Heart left ventricle (tissue), 16 donors: ENCODE measurements at regions of chr10 and their contacts with region 1.

Region 1: GRCh38 chr10:45464958-45465567 is 91.0 kb downstream of the ALOX5 start:
- DNase-seq: peak; percentile 72 to 86 (median 78)
- ATAC-seq: peak; percentile 87 to 93 (median 92)
- H3K4me3 ChIP-seq: no peak overlapping the region
- H3K27ac ChIP-seq: no peak overlapping the region
- H3K4me1 ChIP-seq: peaks cover 0 to 46% (median 7%) of the 10 kb centered on the region in 12 donors
- H3K27me3 ChIP-seq: no peaks in the 10 kb centered on the region
- CTCF ChIP-seq: peak; percentile 80 to 94 (median 88)
- POLR2A ChIP-seq: no peak

Region 2: GRCh38 chr10:45249978-45250693 is 214.9 kb before region 1 on chr10:
- intact Hi-C with region 1: loop called in 5 of 10 experiments (anchors 2 to 10 kb)
- DNase-seq: peak in 1 of 5 donors; percentile 30
- ATAC-seq: peak in 2 of 4 donors; percentile 49 to 73
- H3K4me3 ChIP-seq: peak overlapping the region in 8 of 12 donors; percentile 11 to 47 (median 29)
- H3K27ac ChIP-seq: no peak overlapping the region
- H3K4me1 ChIP-seq: peaks cover 0 to 11% (median 0%) of the 10 kb centered on the region in 12 donors
- H3K27me3 ChIP-seq: peaks cover 0 to 8% (median 0%) of the 10 kb centered on the region in 9 donors
- CTCF ChIP-seq: peak; percentile 54 to 75 (median 68)
- POLR2A ChIP-seq: no peak

Region 3: DNA sequence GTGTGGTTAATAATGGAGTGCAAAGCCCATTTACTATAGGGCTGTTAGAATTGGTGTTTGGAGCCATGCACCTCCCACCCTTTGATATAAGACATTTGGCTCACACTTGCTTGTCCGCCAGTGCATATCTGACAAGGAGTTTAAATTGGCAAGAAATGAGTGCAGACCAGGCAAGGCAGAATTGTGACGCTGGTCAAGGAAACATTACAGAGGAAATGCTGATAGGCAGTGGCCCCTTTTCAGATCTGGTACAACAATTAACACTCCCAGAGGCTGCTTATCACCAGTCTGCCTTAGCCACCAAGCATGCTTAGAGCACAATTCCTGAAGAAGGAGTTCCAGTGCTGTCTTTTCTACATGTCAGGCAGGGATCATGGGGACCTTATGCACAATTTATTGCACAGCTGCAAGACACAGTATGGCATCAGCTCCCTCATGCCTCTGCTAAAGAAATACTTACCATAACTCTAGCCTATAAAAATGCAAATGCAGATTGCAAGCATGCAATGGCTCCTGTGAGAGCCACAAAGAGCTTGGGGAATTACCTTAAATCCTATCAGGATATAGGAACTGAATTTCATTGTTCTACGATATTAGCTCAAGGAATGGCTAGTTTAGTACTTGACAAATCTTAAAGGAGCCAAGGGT is 184.8 kb before region 1 on chr10:
- intact Hi-C with region 1: no loop called
- DNase-seq: peak in 1 of 5 donors; percentile 10
- ATAC-seq: peak in 3 of 4 donors; percentile 20 to 83 (median 71)
- H3K4me3 ChIP-seq: no peak overlapping the region
- H3K27ac ChIP-seq: peak overlapping the region in 1 of 12 donors; percentile 9
- H3K4me1 ChIP-seq: peaks cover 0 to 15% (median 0%) of the 10 kb centered on the region in 12 donors
- H3K27me3 ChIP-seq: peaks cover 0 to 4% (median 0%) of the 10 kb centered on the region in 9 donors
- CTCF ChIP-seq: no peak
- POLR2A ChIP-seq: no peak

Region 4: GRCh38 chr10:45420453-45421192 is 44.4 kb before region 1 on chr10:
- intact Hi-C with region 1: loop called in 1 of 10 experiments (anchors 5 kb)
- DNase-seq: peak; percentile 78 to 91 (median 87)
- ATAC-seq: peak; percentile 11 to 61 (median 47)
- H3K4me3 ChIP-seq: peak overlapping the region in 6 of 12 donors; percentile 59 to 77 (median 72)
- H3K27ac ChIP-seq: peak overlapping the region; percentile 77 to 99 (median 92)
- H3K4me1 ChIP-seq: peaks cover 5 to 72% (median 24%) of the 10 kb centered on the region in 12 donors
- H3K27me3 ChIP-seq: no peaks in the 10 kb centered on the region
- CTCF ChIP-seq: no peak
- POLR2A ChIP-seq: no peak

Region 5: DNA sequence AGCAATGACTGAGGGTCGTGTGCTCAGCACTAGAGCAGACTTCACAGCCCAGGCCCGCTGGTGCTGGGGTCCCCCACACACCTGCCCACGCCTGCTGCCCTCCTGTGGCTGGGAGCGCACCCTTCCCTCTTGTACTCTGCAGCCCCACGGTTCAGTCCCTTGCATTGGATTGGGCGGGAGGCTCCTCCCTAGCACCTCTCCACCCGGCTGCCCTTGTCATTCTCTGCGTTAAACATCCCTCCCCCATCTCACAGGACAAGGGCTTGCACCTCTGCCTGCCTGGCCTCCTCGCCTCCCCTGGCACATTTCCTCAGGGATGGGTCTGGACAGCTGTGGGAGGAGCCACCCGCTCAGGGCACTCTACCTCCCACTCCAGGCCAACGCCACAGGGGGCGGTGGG is 22.4 kb before region 1 on chr10:
- intact Hi-C with region 1: no loop called
- DNase-seq: no peak
- ATAC-seq: no peak
- H3K4me3 ChIP-seq: no peak overlapping the region
- H3K27ac ChIP-seq: no peak overlapping the region
- H3K4me1 ChIP-seq: peaks cover 0 to 6% (median 0%) of the 10 kb centered on the region in 12 donors
- H3K27me3 ChIP-seq: no peaks in the 10 kb centered on the region
- CTCF ChIP-seq: no peak
- POLR2A ChIP-seq: no peak

Region 6: DNA sequence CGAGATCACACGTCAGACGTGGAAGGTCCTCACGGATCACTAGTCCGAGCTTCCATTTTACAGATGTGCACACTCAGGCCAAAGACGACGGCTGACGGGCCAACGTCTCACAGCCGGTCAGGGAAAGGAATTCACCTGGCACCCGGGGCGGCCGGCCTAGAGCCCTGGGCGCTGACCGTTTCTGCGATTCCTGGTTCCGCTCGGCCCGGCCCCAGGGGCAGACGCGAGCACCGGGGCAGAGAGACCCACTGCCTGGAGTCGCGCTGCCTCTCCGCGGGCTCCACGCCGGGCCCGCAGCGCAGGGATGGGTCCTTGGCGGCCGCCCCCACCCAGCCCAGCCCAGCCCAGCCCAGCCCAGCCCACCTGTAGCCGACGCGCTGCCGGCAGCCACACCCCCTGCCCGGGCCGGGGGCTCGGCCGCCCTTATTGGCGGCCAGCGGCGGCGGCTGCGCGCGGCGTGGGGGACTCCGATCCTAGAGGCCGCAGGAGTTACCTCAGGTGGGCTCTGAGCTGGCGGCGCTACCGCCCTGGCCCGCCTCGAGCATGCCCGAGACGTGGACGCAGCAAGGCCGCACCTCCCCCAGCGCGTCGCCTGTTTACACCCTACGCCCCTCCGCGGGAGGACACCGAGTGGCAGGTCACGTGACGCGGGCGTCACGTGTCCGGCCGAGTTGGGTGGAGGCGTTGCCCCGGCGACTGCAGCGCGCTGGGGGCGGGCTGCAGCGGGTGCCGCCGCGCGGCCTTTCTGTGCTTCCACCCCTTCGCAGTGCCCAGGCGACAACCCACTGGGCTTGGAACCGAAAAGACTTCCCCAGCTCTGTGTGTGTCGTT is 129.4 kb after region 1 on chr10:
- intact Hi-C with region 1: loop called in 8 of 10 experiments (anchors 5 to 10 kb)
- DNase-seq: peak; percentile 93 to 97 (median 95)
- ATAC-seq: peak; percentile 97 to 99 (median 98)
- H3K4me3 ChIP-seq: peak overlapping the region; percentile 63 to 97 (median 84)
- H3K27ac ChIP-seq: peak overlapping the region; percentile 2 to 87 (median 67)
- H3K4me1 ChIP-seq: peaks cover 0 to 29% (median 21%) of the 10 kb centered on the region in 12 donors
- H3K27me3 ChIP-seq: peaks cover 0 to 3% (median 0%) of the 10 kb centered on the region in 9 donors
- CTCF ChIP-seq: peak in 2 of 12 donors; percentile 28 to 34
- POLR2A ChIP-seq: peak in 1 of 2 donors; percentile 71